GM12878 (cell line): ENCODE measurements at regions of chr7 and their contacts with region 1.

Region 1: GRCh38 chr7:80770675-80771081 is 132.2 kb downstream of the CD36 start:
- DNase-seq: peak; percentile 40
- ATAC-seq: peak; percentile 97
- H3K4me3 ChIP-seq: no peak overlapping the region
- H3K27ac ChIP-seq: no peak overlapping the region
- H3K4me1 ChIP-seq: no peaks in the 10 kb centered on the region
- H3K27me3 ChIP-seq: 0 out of 4 replicates have a peak, but pooled peaks cover 0 to 2% of the 10 kb centered on the region in 2 experiments
- CTCF ChIP-seq: no peak
- EP300 ChIP-seq: no peak
- POLR2A ChIP-seq: no peak
- RAD21 ChIP-seq: no peak

Region 2: DNA sequence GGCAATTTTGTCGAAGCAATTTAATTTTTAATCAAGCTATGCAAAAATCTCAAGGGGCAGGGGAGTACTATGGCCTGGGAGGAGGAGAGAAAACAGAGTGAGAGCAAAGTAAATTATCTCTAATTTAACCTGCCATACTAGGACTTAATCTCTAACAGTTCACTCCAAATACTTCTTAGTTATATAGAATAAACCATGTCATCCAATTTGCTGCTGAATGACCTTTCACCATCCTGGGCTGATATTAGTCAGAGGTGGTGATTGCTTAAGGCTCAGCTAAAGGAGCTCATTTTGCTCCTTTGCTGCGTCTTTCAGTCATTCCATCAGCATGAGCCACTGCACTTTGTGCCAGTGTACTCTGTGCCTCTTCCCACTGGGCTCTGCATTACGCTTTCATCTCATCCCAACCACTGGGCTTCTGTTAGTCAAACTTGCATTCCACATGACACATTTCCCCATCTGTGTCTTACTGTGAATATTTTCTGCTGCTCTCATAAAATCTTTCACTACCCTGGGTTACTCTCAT is 48.0 kb before region 1 on chr7:
- CTCF ChIA-PET with region 1: no interaction called
- POLR2A ChIA-PET with region 1: no interaction called
- RAD21 ChIA-PET with region 1: no interaction called
- SMC1A ChIA-PET with region 1: no interaction called
- in situ Hi-C with region 1: no loop called
- intact Hi-C with region 1: loop called (anchors 5 kb)
- DNase-seq: no peak
- ATAC-seq: no peak
- H3K4me3 ChIP-seq: no peak overlapping the region
- H3K27ac ChIP-seq: no peak overlapping the region
- H3K4me1 ChIP-seq: no peaks in the 10 kb centered on the region
- H3K27me3 ChIP-seq: no peaks in the 10 kb centered on the region
- CTCF ChIP-seq: no peak
- EP300 ChIP-seq: no peak
- POLR2A ChIP-seq: no peak
- RAD21 ChIP-seq: no peak